ENCODE measurements at regions of chr2 and their contacts with region 1.

Region 1: GRCh38 chr2:68901199-68901960 is 30.2 kb upstream of the BMP10 start:
- DNase-seq: no peak
- ATAC-seq: no peak
- H3K4me3 ChIP-seq: no peak overlapping the region
- H3K4me3 Mint-ChIP-seq: no peak overlapping the region
- H3K27ac ChIP-seq: no peak overlapping the region
- H3K27ac Mint-ChIP-seq: no peak overlapping the region
- H3K4me1 ChIP-seq: no peaks in the 10 kb centered on the region
- H3K4me1 Mint-ChIP-seq: no peaks in the 10 kb centered on the region
- H3K27me3 ChIP-seq: no peaks in the 10 kb centered on the region
- H3K27me3 Mint-ChIP-seq: no peaks in the 10 kb centered on the region
- CTCF ChIP-seq: no peak

Region 2: DNA sequence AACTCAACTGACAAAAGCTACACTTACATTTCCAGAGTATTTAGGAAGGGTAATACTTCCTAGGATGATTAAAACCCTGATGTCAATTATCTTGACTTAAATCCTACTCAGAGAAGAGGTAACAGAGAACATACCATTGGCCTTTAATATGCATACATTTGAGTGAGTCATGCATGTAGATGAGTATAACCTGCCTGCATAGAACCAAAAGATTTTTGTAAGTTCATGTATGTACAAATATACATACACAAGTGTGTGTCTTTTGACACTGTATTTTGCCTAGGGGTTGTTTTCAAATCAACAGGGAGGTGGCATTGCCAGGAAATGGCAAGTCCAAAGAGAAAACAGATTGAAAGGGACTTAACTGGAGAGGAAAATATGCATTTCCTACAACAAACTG is 36.3 kb before region 1 on chr2:
- CTCF ChIA-PET with region 1: no interaction called
- POLR2A ChIA-PET with region 1: no interaction called
- intact Hi-C with region 1: loop called in 1 of 2 experiments (anchors 5 kb)
- DNase-seq: no peak
- ATAC-seq: no peak
- H3K4me3 ChIP-seq: no peak overlapping the region
- H3K4me3 Mint-ChIP-seq: no peak overlapping the region
- H3K27ac ChIP-seq: no peak overlapping the region
- H3K27ac Mint-ChIP-seq: no peak overlapping the region
- H3K4me1 ChIP-seq: no peaks in the 10 kb centered on the region
- H3K4me1 Mint-ChIP-seq: no peaks in the 10 kb centered on the region
- H3K27me3 ChIP-seq: no peaks in the 10 kb centered on the region
- H3K27me3 Mint-ChIP-seq: no peaks in the 10 kb centered on the region
- CTCF ChIP-seq: no peak

Measured in CD4-positive, alpha-beta T cell (primary cell).